Spleen (tissue), 13 donors: ENCODE measurements at regions of chr11 and their contacts with region 1.

Region 1: DNA sequence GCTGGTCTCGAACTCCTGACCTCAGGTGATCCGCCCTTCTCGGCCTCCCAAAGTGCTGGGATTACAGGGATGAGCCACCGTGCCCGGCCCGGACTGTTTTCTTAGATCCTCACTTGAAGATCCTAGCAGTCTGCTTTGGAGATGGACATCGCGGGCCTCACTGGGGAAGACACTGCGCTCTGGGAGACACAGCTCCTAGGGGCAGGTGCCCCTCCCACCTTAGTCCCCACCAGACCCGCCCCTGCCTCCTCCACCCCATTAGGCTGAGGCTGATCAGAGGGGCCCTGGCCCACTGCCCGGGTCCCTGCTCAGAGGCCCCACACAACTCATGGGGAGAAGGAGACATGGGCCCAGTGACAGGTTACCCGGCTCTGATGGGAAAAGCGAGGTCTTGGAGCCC is 11.3 kb upstream of the LTO1 start:
- DNase-seq: peak; percentile 67
- H3K4me3 ChIP-seq: no peak overlapping the region
- H3K27ac ChIP-seq: no peak overlapping the region
- H3K4me1 ChIP-seq: peaks cover 0 to 11% (median 9%) of the 10 kb centered on the region in 6 donors
- H3K27me3 ChIP-seq: peaks cover 0 to 59% (median 15%) of the 10 kb centered on the region in 7 donors
- CTCF ChIP-seq: no peak
- POLR2A ChIP-seq: no peak

Region 2: DNA sequence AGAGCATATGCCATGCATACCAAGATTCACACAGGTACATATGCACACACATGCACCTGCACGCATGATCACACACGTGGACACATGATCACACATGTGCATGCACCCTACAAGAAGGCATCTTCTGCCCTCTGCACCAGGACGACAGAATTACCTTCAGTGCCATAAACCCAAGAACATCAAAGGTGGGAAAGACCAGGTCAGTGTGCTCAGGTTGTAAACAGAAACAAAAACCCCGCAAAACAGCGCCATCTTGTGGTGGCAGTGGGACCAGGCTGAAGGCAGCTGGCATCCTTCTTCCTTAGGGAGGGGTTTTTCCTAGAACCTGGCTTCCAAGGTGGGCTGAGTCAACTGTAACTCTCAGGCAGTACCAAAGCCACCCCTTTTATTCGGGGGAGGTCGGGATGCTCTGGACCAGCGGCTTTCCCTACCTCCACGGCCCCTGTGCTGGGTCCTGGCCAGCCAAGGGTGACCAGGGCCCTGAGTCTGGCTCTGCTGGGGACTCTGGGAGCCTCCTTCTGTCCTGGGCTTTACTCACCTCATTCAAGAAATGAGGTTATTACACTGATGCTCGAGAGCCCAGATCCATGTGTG is 202.1 kb after region 1 on chr11:
- intact Hi-C with region 1: loop called (anchors 5 kb)
- DNase-seq: peak; percentile 82
- H3K4me3 ChIP-seq: no peak overlapping the region
- H3K27ac ChIP-seq: no peak overlapping the region
- H3K4me1 ChIP-seq: peaks cover 0 to 27% (median 2%) of the 10 kb centered on the region in 6 donors
- H3K27me3 ChIP-seq: peaks cover 0 to 64% (median 34%) of the 10 kb centered on the region in 7 donors
- CTCF ChIP-seq: peak; percentile 54 to 91 (median 84)
- POLR2A ChIP-seq: no peak